CD4-positive, alpha-beta T cell (primary cell): ENCODE measurements at regions of chr17 and their contacts with region 1.

Region 1: GRCh38 chr17:35486920-35487732 is 38.6 kb upstream of the SLFN13 start:
- DNase-seq: peak; percentile 35 to 89 (median 69)
- ATAC-seq: peak; percentile 72
- H3K4me3 ChIP-seq: peak overlapping the region; percentile 89
- H3K4me3 Mint-ChIP-seq: peak overlapping the region; percentile 95
- H3K27ac ChIP-seq: peak overlapping the region; percentile 76 to 82
- H3K27ac Mint-ChIP-seq: peak overlapping the region; percentile 96
- H3K4me1 ChIP-seq: peaks cover 38% of the 10 kb centered on the region
- H3K4me1 Mint-ChIP-seq: peaks cover 60% of the 10 kb centered on the region
- H3K27me3 ChIP-seq: no peaks in the 10 kb centered on the region
- H3K27me3 Mint-ChIP-seq: no peaks in the 10 kb centered on the region
- CTCF ChIP-seq: no peak

Region 2: GRCh38 chr17:35312790-35313711 is 174.1 kb before region 1 on chr17:
- CTCF ChIA-PET with region 1: interaction called, 9 read pairs
- POLR2A ChIA-PET with region 1: interaction called, 50 read pairs
- intact Hi-C with region 1: loop called (anchors 2 kb)
- DNase-seq: peak; percentile 67 to 97 (median 76)
- ATAC-seq: peak; percentile 90
- H3K4me3 ChIP-seq: peak overlapping the region; percentile 77
- H3K4me3 Mint-ChIP-seq: peak overlapping the region; percentile 89
- H3K27ac ChIP-seq: peak overlapping the region; percentile 69 to 70
- H3K27ac Mint-ChIP-seq: peak overlapping the region; percentile 96
- H3K4me1 ChIP-seq: peaks cover 30% of the 10 kb centered on the region
- H3K4me1 Mint-ChIP-seq: peaks cover 67% of the 10 kb centered on the region
- H3K27me3 ChIP-seq: no peaks in the 10 kb centered on the region
- H3K27me3 Mint-ChIP-seq: no peaks in the 10 kb centered on the region
- CTCF ChIP-seq: peak; percentile 78

Region 3: GRCh38 chr17:35432176-35433074 is 54.7 kb before region 1 on chr17 and contains the start of gene SLFN12:
- CTCF ChIA-PET with region 1: interaction called, 5 read pairs
- POLR2A ChIA-PET with region 1: interaction called, 13 read pairs
- intact Hi-C with region 1: no loop called
- DNase-seq: peak in 13 of 14 experiments; percentile 5 to 87 (median 35)
- ATAC-seq: peak; percentile 92
- H3K4me3 ChIP-seq: peak within 1 kb of the TSS; percentile 88
- H3K4me3 Mint-ChIP-seq: peak within 1 kb of the TSS; percentile 99
- H3K27ac ChIP-seq: peak within 1 kb of the TSS; percentile 51 to 57
- H3K27ac Mint-ChIP-seq: peak within 1 kb of the TSS; percentile 85
- H3K4me1 ChIP-seq: peaks cover 38% of the 10 kb centered on the region
- H3K4me1 Mint-ChIP-seq: peaks cover 51% of the 10 kb centered on the region
- H3K27me3 ChIP-seq: no peaks in the 10 kb centered on the region
- H3K27me3 Mint-ChIP-seq: no peaks in the 10 kb centered on the region
- CTCF ChIP-seq: no peak
- total RNA-seq, gene SLFN12: 1.3 to 2.4 TPM

Region 4: DNA sequence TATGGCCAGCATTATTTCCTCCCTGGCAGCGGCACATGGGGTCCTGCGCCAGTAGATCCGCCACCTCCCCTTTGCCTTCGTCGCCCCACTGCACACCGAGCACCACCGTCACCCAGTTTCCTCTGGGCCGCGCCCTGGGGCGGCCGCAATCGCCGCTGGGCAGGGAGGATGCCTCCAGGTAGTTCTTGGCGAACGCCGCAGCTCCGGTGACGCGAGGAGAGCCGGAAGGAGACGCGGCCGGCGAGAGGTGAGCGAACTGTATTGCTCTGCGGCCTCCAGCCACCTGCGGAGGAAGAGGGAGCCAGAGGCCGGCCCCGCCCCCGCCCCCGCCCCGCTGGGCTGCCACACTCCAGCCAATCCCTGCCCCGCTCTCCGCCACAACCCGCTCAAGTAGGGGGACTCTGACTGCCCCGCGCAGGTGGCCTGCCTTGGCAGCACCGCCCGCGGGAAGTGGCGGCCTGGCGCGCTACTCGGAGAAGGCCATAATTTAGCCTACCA is 26.7 kb before region 1 on chr17:
- CTCF ChIA-PET with region 1: no interaction called
- POLR2A ChIA-PET with region 1: interaction called, 13 read pairs
- intact Hi-C with region 1: no loop called
- DNase-seq: peak; percentile 27 to 92 (median 52)
- ATAC-seq: peak; percentile 92
- H3K4me3 ChIP-seq: peak overlapping the region; percentile 42
- H3K4me3 Mint-ChIP-seq: peak overlapping the region; percentile 68
- H3K27ac ChIP-seq: no peak overlapping the region
- H3K27ac Mint-ChIP-seq: peak overlapping the region; percentile 80
- H3K4me1 ChIP-seq: peaks cover 12% of the 10 kb centered on the region
- H3K4me1 Mint-ChIP-seq: peaks cover 28% of the 10 kb centered on the region
- H3K27me3 ChIP-seq: no peaks in the 10 kb centered on the region
- H3K27me3 Mint-ChIP-seq: no peaks in the 10 kb centered on the region
- CTCF ChIP-seq: no peak

Region 5: DNA sequence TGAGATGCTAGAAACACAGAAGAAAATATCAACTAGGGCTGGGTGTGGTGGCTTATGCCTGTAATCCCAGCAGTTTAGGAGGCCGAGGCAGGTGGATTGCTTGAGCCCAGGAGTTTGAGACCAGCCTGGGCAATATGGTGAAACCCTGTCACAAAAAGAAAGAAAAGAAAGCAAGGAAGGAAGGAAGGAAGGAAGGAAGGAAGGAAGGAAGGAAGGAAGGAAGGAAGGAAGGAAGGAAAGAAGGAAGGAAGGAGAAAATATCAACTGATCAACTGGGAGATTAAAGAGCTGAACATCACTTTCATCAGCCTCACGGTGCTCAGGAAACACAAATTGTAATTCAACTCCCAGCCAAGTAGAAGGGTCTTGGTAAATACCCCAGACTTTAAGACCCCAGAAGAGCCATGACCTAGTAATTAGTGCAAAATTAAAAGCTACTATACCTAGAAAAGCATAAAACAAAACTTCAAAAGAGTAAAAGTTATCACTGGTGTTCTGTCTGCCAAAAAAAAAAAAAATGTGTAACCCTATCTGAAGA is 10.8 kb before region 1 on chr17:
- CTCF ChIA-PET with region 1: interaction called, 3 read pairs
- POLR2A ChIA-PET with region 1: interaction called, 13 read pairs
- intact Hi-C with region 1: no loop called
- DNase-seq: no peak
- ATAC-seq: no peak
- H3K4me3 ChIP-seq: no peak overlapping the region
- H3K4me3 Mint-ChIP-seq: no peak overlapping the region
- H3K27ac ChIP-seq: no peak overlapping the region
- H3K27ac Mint-ChIP-seq: no peak overlapping the region
- H3K4me1 ChIP-seq: peaks cover 2% of the 10 kb centered on the region
- H3K4me1 Mint-ChIP-seq: peaks cover 40% of the 10 kb centered on the region
- H3K27me3 ChIP-seq: no peaks in the 10 kb centered on the region
- H3K27me3 Mint-ChIP-seq: no peaks in the 10 kb centered on the region
- CTCF ChIP-seq: no peak

Region 6: DNA sequence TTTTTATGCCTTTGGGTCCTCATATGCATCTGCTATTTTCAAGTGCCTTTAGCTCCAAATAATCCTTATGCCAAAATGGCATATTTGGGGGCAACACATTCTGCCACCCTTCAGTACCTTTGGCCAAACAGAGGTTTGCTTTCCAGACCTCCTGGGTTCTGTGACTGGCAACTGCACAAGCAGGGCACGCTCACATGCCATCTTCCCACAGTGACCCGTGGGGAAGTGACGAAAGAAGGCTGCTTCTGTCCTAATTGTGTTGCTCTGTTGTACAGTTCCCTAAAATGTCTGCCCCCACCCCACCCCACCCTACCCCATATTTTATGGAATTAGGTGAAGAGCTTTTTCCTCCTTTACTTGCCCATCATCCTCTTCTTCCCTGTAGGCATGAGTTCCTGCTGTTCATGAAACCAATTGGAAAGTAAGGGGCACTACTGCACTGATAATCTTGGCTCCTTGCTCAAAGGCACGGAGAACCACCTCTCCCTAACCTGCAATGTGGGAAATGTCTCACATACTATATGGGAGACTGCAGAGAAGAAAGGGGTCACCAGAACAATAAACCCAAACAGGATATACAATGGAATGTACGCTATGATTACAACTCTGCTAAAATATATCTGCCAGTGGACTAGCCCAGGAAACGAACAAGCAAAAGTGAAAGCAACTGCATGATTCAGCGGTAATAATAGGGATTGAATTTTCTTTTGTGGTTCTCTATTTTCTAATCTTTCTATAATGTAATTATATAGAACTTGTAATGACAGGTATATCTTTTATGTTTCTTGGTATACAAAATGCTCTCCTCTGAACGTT is 53.7 kb after region 1 on chr17:
- CTCF ChIA-PET with region 1: interaction called, 9 read pairs
- POLR2A ChIA-PET with region 1: interaction called, 68 read pairs
- intact Hi-C with region 1: loop called (anchors 5 kb)
- DNase-seq: peak in 7 of 14 experiments; percentile 21 to 83 (median 59)
- ATAC-seq: peak; percentile 47
- H3K4me3 ChIP-seq: peak overlapping the region; percentile 56
- H3K4me3 Mint-ChIP-seq: peak overlapping the region; percentile 93
- H3K27ac ChIP-seq: peak overlapping the region; percentile 67 to 85
- H3K27ac Mint-ChIP-seq: peak overlapping the region; percentile 82
- H3K4me1 ChIP-seq: peaks cover 23% of the 10 kb centered on the region
- H3K4me1 Mint-ChIP-seq: peaks cover 60% of the 10 kb centered on the region
- H3K27me3 ChIP-seq: no peaks in the 10 kb centered on the region
- H3K27me3 Mint-ChIP-seq: no peaks in the 10 kb centered on the region
- CTCF ChIP-seq: no peak

Region 7: DNA sequence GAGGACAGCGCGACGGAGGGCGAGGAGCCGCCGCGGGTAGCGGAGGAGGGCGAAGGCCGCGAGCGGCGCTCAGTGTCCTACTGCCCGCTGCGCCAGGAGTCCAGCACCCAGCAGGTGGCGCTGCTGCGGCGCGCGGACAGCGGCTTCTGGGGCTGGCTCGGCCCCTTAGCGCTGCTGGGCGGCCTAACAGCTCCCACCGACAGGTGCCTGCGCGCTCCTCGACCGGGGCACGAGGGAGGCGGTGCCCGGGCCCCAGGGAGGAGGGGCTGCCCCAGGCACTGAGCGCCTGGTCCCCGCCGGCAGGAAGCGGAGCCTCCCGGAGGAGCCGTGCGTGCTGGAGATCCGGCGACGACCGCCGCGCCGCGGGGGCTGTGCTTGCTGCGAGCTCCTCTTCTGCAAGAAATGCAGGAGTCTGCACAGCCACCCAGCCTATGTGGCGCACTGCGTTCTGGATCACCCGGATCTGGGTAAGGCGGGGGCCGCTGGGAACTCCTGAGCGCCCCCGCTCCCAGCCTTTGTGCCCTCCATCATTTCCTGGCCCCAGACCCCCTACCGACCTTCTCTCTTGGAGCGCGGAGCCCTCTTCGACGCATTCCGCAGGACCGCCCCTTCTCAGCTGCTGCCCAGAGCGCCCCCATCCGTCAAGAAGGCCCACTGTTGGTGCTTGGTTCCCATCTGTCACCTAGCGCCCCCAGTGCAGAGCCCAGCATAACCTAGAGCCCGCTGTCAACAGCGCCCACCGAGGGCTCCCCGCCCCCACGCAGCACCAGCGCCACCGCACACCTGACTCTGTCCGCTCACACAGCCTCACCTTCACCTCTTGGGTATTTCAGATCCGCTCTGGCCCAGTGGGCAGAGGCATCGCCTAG is 277.2 kb after region 1 on chr17:
- CTCF ChIA-PET with region 1: no interaction called
- POLR2A ChIA-PET with region 1: no interaction called
- intact Hi-C with region 1: no loop called
- DNase-seq: peak; percentile 72 to 94 (median 84)
- ATAC-seq: peak; percentile 87
- H3K4me3 ChIP-seq: peak overlapping the region; percentile 79
- H3K4me3 Mint-ChIP-seq: peak overlapping the region; percentile 90
- H3K27ac ChIP-seq: peak overlapping the region; percentile 20 to 23
- H3K27ac Mint-ChIP-seq: peak overlapping the region; percentile 32
- H3K4me1 ChIP-seq: peaks cover 12% of the 10 kb centered on the region
- H3K4me1 Mint-ChIP-seq: peaks cover 7% of the 10 kb centered on the region
- H3K27me3 ChIP-seq: no peaks in the 10 kb centered on the region
- H3K27me3 Mint-ChIP-seq: no peaks in the 10 kb centered on the region
- CTCF ChIP-seq: peak; percentile 82